ENCODE measurements at regions of chr20 and their contacts with region 1.

Region 1: DNA sequence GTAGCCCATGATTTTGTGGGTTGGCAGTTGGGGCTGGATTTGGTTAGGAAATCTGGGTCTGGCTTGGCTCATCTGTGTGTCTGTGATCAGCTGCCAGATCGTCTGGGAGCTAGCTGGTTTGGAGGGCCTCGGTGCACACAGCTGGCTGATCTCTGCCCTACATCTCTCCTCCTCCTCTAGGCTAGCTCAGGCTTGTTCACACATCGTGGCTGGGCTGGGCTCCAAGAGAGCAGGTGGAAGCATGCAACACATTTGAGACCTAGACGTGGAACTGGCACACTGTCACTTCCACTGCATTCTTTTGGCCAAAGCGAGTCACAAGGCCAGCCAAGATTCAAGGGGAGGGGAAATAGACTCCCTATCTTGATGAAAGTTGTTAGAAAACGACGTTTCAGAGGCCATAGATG is 15.9 kb downstream of the NDUFAF5 start:
- DNase-seq: no peak
- ATAC-seq: no peak
- H3K4me3 ChIP-seq: no peak overlapping the region
- H3K4me3 Mint-ChIP-seq: no peak overlapping the region
- H3K27ac ChIP-seq: no peak overlapping the region
- H3K27ac Mint-ChIP-seq: no peak overlapping the region
- H3K4me1 ChIP-seq: no peaks in the 10 kb centered on the region
- H3K4me1 Mint-ChIP-seq: peaks cover 0 to 4% (median 0%) of the 10 kb centered on the region in 3 donors
- H3K27me3 ChIP-seq: no peaks in the 10 kb centered on the region
- H3K27me3 Mint-ChIP-seq: no peaks in the 10 kb centered on the region

Region 2: GRCh38 chr20:13449868-13450434 is 350.8 kb before region 1 on chr20:
- CTCF ChIA-PET with region 1: interaction called in 1 of 2 experiments, 10 read pairs
- POLR2A ChIA-PET with region 1: no interaction called
- DNase-seq: no peak
- ATAC-seq: no peak
- H3K4me3 ChIP-seq: no peak overlapping the region
- H3K4me3 Mint-ChIP-seq: no peak overlapping the region
- H3K27ac ChIP-seq: no peak overlapping the region
- H3K27ac Mint-ChIP-seq: no peak overlapping the region
- H3K4me1 ChIP-seq: no peaks in the 10 kb centered on the region
- H3K4me1 Mint-ChIP-seq: no peaks in the 10 kb centered on the region
- H3K27me3 ChIP-seq: no peaks in the 10 kb centered on the region
- H3K27me3 Mint-ChIP-seq: no peaks in the 10 kb centered on the region

Region 3: DNA sequence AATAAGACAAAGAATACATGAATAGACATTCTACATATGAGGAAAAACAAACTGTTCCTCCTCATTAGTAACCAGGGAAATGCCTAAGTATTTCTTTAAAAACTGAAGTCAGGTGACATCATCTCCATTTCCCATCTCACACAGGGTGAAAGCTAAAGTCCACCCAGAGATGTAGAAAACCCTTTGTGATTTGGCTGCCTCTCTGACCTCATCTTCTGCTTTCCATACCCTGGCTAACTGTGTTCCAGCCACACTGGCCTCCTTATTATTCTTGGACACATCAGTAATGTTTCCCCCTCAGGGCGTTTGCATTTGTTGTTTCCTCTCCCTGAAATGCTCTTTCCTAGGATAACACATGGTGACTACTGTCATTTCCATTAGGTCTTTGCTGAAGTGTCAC is 56.4 kb before region 1 on chr20:
- CTCF ChIA-PET with region 1: no interaction called
- POLR2A ChIA-PET with region 1: no interaction called
- DNase-seq: no peak
- ATAC-seq: no peak
- H3K4me3 ChIP-seq: no peak overlapping the region
- H3K4me3 Mint-ChIP-seq: no peak overlapping the region
- H3K27ac ChIP-seq: no peak overlapping the region
- H3K27ac Mint-ChIP-seq: no peak overlapping the region
- H3K4me1 ChIP-seq: no peaks in the 10 kb centered on the region
- H3K4me1 Mint-ChIP-seq: no peaks in the 10 kb centered on the region
- H3K27me3 ChIP-seq: no peaks in the 10 kb centered on the region
- H3K27me3 Mint-ChIP-seq: no peaks in the 10 kb centered on the region